ENCODE measurements at regions of chr17 and their contacts with region 1.

Region 1: DNA sequence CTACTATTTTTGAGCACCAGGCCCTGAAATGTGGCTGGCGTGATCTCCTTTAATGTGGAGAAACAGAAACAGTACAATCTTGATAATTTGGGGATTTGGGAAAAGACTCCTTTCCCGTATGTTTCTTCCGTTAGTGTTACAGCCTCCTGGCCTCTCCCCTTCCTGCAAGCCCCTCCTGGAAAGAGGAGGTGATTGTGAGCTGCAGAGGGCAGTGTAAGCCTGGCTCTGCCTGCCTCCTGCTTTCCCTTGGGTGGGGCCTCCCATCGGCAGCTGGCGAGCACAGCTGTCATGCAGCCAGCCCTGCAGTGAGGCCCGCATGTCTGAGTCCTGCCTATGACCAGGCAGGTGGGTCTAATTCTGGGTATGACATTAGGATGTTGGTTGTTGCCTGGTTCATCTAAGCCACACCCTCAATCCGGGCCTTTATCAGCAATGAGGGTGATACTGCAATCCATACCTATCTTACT is 48.7 kb upstream of the WSB1 start:
- DNase-seq: peak; percentile 88
- H3K4me3 ChIP-seq: no peak overlapping the region
- H3K27ac ChIP-seq: peak overlapping the region; percentile 32
- H3K4me1 ChIP-seq: peaks cover 27% of the 10 kb centered on the region
- H3K27me3 ChIP-seq: no peaks in the 10 kb centered on the region
- CTCF ChIP-seq: peak; percentile 79 to 81
- POLR2A ChIP-seq: peak; percentile 55

Region 2: GRCh38 chr17:27226615-27227230 is 18.5 kb before region 1 on chr17:
- CTCF ChIA-PET with region 1: no interaction called
- POLR2A ChIA-PET with region 1: no interaction called
- dilution Hi-C with region 1: no loop called
- intact Hi-C with region 1: no loop called
- DNase-seq: peak; percentile 56
- H3K4me3 ChIP-seq: no peak overlapping the region
- H3K27ac ChIP-seq: no peak overlapping the region
- H3K4me1 ChIP-seq: peaks cover 9% of the 10 kb centered on the region
- H3K27me3 ChIP-seq: no peaks in the 10 kb centered on the region
- CTCF ChIP-seq: no peak
- POLR2A ChIP-seq: no peak

Region 3: GRCh38 chr17:27265333-27265732 is 20.1 kb after region 1 on chr17:
- CTCF ChIA-PET with region 1: interaction called, 10 read pairs
- POLR2A ChIA-PET with region 1: no interaction called
- dilution Hi-C with region 1: no loop called
- intact Hi-C with region 1: loop called (anchors 1 kb)
- DNase-seq: peak; percentile 93
- H3K4me3 ChIP-seq: no peak overlapping the region
- H3K27ac ChIP-seq: peak overlapping the region; percentile 55
- H3K4me1 ChIP-seq: peaks cover 33% of the 10 kb centered on the region
- H3K27me3 ChIP-seq: peaks cover 0 to 4% of the 10 kb centered on the region in 2 experiments
- CTCF ChIP-seq: no peak
- POLR2A ChIP-seq: peak; percentile 63

Region 4: GRCh38 chr17:27293898-27294688 is 48.8 kb after region 1 on chr17 and contains the start of gene WSB1:
- CTCF ChIA-PET with region 1: interaction called, 33 read pairs
- POLR2A ChIA-PET with region 1: interaction called, 20 read pairs
- dilution Hi-C with region 1: no loop called
- intact Hi-C with region 1: loop called (anchors 1 kb)
- DNase-seq: peak; percentile 90
- H3K4me3 ChIP-seq: peak within 1 kb of the TSS; percentile 45 to 96 (median 86)
- H3K27ac ChIP-seq: peak within 1 kb of the TSS; percentile 94
- H3K4me1 ChIP-seq: peaks cover 14% of the 10 kb centered on the region
- H3K27me3 ChIP-seq: no peaks in the 10 kb centered on the region
- CTCF ChIP-seq: no peak
- POLR2A ChIP-seq: peak; percentile 99
- total RNA-seq, gene WSB1: 334 and 471 TPM in 2 replicates

Region 5: GRCh38 chr17:27315322-27315721 is 70.1 kb after region 1 on chr17:
- CTCF ChIA-PET with region 1: interaction called, 19 read pairs
- POLR2A ChIA-PET with region 1: no interaction called
- dilution Hi-C with region 1: no loop called
- intact Hi-C with region 1: no loop called
- DNase-seq: no peak
- H3K4me3 ChIP-seq: no peak overlapping the region
- H3K27ac ChIP-seq: no peak overlapping the region
- H3K4me1 ChIP-seq: no peaks in the 10 kb centered on the region
- H3K27me3 ChIP-seq: no peaks in the 10 kb centered on the region
- CTCF ChIP-seq: no peak
- POLR2A ChIP-seq: no peak

Region 6: DNA sequence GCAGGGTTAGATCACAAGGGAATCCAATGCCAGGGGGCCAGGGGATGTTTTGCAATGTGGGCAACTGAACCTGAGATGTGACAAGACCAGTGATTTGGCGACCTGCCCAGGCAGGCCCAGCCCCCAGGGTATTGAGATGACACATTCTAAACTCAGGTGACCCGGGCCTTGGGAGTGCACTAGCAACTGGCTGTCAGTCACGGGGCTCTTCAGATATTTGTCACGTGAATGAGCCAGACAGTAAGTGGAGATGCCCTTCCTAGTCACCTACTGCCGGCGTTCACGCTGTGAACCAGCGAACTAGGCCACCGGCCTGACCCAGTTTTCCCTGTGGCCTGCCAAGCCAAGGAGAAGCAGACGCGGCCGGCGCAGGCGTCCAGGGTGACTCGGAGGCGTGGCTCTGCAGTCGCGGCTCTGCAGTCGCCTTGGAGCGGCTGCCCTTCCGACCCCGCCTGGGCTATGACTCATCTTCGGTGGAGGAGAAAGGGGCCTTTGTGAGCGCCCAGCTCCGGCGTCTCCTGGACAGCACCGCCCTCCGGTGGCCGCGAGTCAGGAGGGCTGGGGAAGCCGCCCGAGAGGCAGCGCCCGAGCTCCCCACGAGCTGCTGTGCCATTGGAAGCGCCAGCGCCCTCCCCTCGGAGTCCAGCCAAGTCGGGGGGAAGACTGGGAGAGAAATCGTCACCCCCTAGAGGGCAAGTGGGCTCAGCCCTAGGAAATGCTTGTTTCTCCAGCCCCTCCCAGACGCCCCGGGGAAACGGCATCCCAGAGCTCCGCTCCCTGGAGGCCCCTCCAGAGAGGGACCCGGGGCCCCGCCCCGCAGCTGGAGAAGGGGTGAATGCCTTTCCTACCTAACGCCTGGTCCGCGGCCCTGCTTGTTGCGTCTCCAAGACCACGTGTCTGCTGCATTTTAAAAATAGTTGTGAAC is 87.5 kb after region 1 on chr17:
- CTCF ChIA-PET with region 1: interaction called, 33 read pairs
- POLR2A ChIA-PET with region 1: interaction called, 4 read pairs
- dilution Hi-C with region 1: no loop called
- intact Hi-C with region 1: loop called (anchors 1 kb)
- DNase-seq: peak; percentile 98
- H3K4me3 ChIP-seq: peak overlapping the region; percentile 3 to 65 (median 17)
- H3K27ac ChIP-seq: peak overlapping the region; percentile 78
- H3K4me1 ChIP-seq: peaks cover 16% of the 10 kb centered on the region
- H3K27me3 ChIP-seq: no peaks in the 10 kb centered on the region
- CTCF ChIP-seq: peak; percentile 91 to 97
- POLR2A ChIP-seq: peak; percentile 39

Region 7: GRCh38 chr17:27381007-27381501 is 135.8 kb after region 1 on chr17:
- CTCF ChIA-PET with region 1: interaction called, 4 read pairs
- POLR2A ChIA-PET with region 1: no interaction called
- dilution Hi-C with region 1: no loop called
- intact Hi-C with region 1: loop called (anchors 2 kb)
- DNase-seq: peak; percentile 51
- H3K4me3 ChIP-seq: no peak overlapping the region
- H3K27ac ChIP-seq: peak overlapping the region; percentile 77
- H3K4me1 ChIP-seq: peaks cover 45% of the 10 kb centered on the region
- H3K27me3 ChIP-seq: no peaks in the 10 kb centered on the region
- CTCF ChIP-seq: peak; percentile 94 to 95
- POLR2A ChIP-seq: no peak

Region 8: GRCh38 chr17:27892866-27893769 is 647.9 kb after region 1 on chr17 and contains the start of gene LYRM9:
- CTCF ChIA-PET with region 1: no interaction called
- POLR2A ChIA-PET with region 1: no interaction called
- dilution Hi-C with region 1: no loop called
- intact Hi-C with region 1: no loop called
- DNase-seq: peak; percentile 91
- H3K4me3 ChIP-seq: peak within 1 kb of the TSS; percentile 8 to 66 (median 61)
- H3K27ac ChIP-seq: peak within 1 kb of the TSS; percentile 30
- H3K4me1 ChIP-seq: peaks cover 11% of the 10 kb centered on the region
- H3K27me3 ChIP-seq: peaks cover 6 to 17% of the 10 kb centered on the region in 2 experiments
- CTCF ChIP-seq: peak; percentile 84 to 97
- POLR2A ChIP-seq: peak; percentile 66
- total RNA-seq, gene LYRM9: 3.1 and 4.0 TPM in 2 replicates

Measured in endothelial cell of umbilical vein (primary cell).